ENCODE measurements at regions of chr15 and their contacts with region 1.

Region 1: DNA sequence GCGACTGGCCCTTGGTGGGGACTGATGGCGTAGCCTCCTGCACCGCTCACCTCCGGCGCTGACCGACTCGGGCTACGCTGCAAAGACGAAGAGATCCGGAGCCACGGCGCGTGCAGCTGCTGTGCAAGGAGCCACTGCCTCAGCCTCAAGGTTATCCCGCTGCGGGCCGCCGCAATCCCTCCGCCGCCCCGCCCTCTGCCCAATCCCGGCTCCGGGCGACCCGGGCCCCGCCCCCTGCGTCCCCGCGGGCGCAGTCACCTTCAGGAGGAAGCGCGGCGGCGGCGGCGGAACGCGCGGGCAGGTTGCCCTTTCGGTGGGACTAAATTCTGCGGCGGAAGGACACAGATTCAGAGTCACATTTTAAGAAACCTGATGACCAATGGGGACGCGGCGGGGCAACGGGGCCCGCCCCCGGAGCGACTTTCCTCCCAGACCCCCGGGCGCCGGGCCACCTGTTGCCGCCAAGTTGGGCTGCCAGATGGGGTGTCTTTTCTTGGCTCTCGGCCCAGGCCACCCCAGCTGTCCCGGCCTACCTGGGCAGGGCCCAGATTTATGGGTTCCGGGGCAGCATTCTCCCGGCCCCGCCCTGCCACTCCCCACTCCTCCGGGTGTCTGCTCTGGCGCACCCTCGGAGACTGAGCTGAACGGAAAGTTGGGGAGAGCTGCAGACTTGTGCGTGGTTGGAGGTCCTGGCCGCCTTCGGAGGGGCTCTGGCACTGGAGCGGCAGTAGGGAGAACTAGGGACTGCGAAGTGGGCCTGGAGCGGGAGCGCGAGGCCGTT is at the start of gene PKM:
- DNase-seq: peak; percentile 96
- H3K4me3 Mint-ChIP-seq: peak within 1 kb of the TSS; percentile 100
- H3K27ac Mint-ChIP-seq: peak within 1 kb of the TSS; percentile 99
- H3K4me1 Mint-ChIP-seq: peaks cover 44% of the 10 kb centered on the region
- H3K27me3 Mint-ChIP-seq: no peaks in the 10 kb centered on the region
- total RNA-seq, gene PKM: 1,064 to 1,081 TPM

Region 2: DNA sequence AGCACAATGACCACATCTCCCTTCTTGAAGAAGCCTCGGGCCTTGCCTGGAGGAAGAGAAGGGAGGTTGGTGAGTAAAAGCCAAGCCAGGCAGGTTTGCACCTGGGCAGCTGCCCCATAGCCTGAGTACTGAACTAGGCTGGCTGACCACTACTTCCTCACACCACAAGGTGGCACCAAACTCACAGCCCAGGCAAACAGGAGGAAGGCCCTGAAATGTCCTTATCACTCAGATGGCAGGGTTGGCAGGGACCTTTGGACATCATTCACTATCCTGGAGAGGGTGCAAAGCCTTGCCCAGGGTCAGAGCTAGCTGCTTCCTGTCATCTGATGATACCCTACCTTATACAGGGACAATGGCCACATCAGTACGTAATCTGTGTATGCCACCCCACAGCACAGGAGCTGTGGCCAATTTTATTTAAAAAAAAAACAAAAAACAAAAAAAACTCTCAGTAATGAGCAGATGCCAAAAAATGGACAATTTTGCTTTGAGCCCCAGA is 31.5 kb before region 1 on chr15:
- CTCF ChIA-PET with region 1: interaction called, 28 read pairs
- POLR2A ChIA-PET with region 1: interaction called, 61 read pairs
- DNase-seq: peak; percentile 78
- H3K4me3 Mint-ChIP-seq: no peak overlapping the region
- H3K27ac Mint-ChIP-seq: no peak overlapping the region
- H3K4me1 Mint-ChIP-seq: peaks cover 23% of the 10 kb centered on the region
- H3K27me3 Mint-ChIP-seq: peaks cover 16% of the 10 kb centered on the region

Region 3: DNA sequence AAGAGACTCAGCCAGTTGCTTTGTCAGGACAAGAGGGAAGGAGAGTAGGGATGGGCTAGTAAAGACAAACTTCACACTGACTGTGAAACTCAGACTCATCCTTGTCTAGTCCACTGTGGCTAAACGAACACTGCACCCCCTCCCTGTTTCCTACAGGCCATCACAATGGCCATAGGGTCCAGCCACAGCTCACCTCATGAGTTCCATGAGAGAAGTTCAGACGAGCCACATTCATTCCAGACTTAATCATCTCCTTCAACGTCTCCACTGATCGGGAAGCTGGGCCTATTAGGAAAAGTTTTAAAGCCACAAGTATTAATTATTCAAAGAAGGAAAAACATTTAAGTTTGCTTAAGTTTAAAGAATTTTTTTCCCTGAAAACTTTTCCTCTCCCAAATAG is 14.0 kb before region 1 on chr15:
- CTCF ChIA-PET with region 1: interaction called, 11 read pairs
- POLR2A ChIA-PET with region 1: interaction called, 21 read pairs
- DNase-seq: no peak
- H3K4me3 Mint-ChIP-seq: no peak overlapping the region
- H3K27ac Mint-ChIP-seq: no peak overlapping the region
- H3K4me1 Mint-ChIP-seq: peaks cover 28% of the 10 kb centered on the region
- H3K27me3 Mint-ChIP-seq: no peaks in the 10 kb centered on the region

Region 4: GRCh38 chr15:72285927-72286516 is 54.8 kb after region 1 on chr15:
- CTCF ChIA-PET with region 1: interaction called, 14 read pairs
- POLR2A ChIA-PET with region 1: interaction called, 4 read pairs
- DNase-seq: peak; percentile 44
- H3K4me3 Mint-ChIP-seq: no peak overlapping the region
- H3K27ac Mint-ChIP-seq: no peak overlapping the region
- H3K4me1 Mint-ChIP-seq: no peaks in the 10 kb centered on the region
- H3K27me3 Mint-ChIP-seq: no peaks in the 10 kb centered on the region

Region 5: DNA sequence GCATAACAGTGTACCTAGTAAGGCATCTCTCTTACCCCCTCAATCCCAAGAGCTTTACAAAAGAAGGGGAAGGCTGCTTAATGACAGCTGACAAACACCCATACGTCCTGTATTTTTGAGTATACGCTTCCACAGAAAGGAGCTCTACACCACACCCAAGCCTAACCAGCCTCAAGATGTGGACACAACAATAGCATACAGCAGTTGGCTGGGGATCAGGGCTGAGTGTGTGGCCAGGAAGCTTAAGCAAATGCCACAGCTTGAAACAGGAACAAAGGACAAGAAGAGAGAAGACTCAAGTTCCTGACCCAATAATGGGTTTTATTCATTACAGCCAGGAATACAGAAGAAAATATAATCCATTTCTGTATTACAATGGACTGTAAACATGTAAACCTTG is 137.6 kb after region 1 on chr15:
- CTCF ChIA-PET with region 1: no interaction called
- POLR2A ChIA-PET with region 1: no interaction called
- DNase-seq: no peak
- H3K4me3 Mint-ChIP-seq: no peak overlapping the region
- H3K27ac Mint-ChIP-seq: no peak overlapping the region
- H3K4me1 Mint-ChIP-seq: peaks cover 42% of the 10 kb centered on the region
- H3K27me3 Mint-ChIP-seq: no peaks in the 10 kb centered on the region

Region 6: GRCh38 chr15:72473614-72474465 is 242.6 kb after region 1 on chr15 and contains the start of gene ARIH1:
- CTCF ChIA-PET with region 1: interaction called, 5 read pairs
- POLR2A ChIA-PET with region 1: interaction called, 19 read pairs
- DNase-seq: peak; percentile 95
- H3K4me3 Mint-ChIP-seq: peak within 1 kb of the TSS; percentile 91
- H3K27ac Mint-ChIP-seq: peak within 1 kb of the TSS; percentile 98
- H3K4me1 Mint-ChIP-seq: peaks cover 43% of the 10 kb centered on the region
- H3K27me3 Mint-ChIP-seq: no peaks in the 10 kb centered on the region
- total RNA-seq, gene ARIH1: 133 to 138 TPM

Measured in activated CD4-positive, alpha-beta memory T cell treated with anti-CD3 and anti-CD28 coated beads, Interleukin-2, amount 10 ng/mL, durations not matched to agents 7 days and 5 days (primary cell).